ENCODE measurements at regions of chr1 and their contacts with region 1.

Region 1: GRCh38 chr1:155308493-155309422 is at the start of gene FDPS:
- DNase-seq: peak; percentile 99
- H3K4me3 Mint-ChIP-seq: peak within 1 kb of the TSS; percentile 96
- H3K27ac Mint-ChIP-seq: peak within 1 kb of the TSS; percentile 99
- H3K4me1 Mint-ChIP-seq: peaks cover 35% of the 10 kb centered on the region
- H3K27me3 Mint-ChIP-seq: no peaks in the 10 kb centered on the region
- total RNA-seq, gene FDPS: 332 to 333 TPM

Region 2: GRCh38 chr1:155193275-155193990 is 115.3 kb before region 1 on chr1:
- CTCF ChIA-PET with region 1: interaction called, 3 read pairs
- intact Hi-C with region 1: loop called (anchors 5 kb)
- DNase-seq: peak; percentile 86
- H3K4me3 Mint-ChIP-seq: peak overlapping the region; percentile 93
- H3K27ac Mint-ChIP-seq: peak overlapping the region; percentile 96
- H3K4me1 Mint-ChIP-seq: peaks cover 27% of the 10 kb centered on the region
- H3K27me3 Mint-ChIP-seq: no peaks in the 10 kb centered on the region

Region 3: DNA sequence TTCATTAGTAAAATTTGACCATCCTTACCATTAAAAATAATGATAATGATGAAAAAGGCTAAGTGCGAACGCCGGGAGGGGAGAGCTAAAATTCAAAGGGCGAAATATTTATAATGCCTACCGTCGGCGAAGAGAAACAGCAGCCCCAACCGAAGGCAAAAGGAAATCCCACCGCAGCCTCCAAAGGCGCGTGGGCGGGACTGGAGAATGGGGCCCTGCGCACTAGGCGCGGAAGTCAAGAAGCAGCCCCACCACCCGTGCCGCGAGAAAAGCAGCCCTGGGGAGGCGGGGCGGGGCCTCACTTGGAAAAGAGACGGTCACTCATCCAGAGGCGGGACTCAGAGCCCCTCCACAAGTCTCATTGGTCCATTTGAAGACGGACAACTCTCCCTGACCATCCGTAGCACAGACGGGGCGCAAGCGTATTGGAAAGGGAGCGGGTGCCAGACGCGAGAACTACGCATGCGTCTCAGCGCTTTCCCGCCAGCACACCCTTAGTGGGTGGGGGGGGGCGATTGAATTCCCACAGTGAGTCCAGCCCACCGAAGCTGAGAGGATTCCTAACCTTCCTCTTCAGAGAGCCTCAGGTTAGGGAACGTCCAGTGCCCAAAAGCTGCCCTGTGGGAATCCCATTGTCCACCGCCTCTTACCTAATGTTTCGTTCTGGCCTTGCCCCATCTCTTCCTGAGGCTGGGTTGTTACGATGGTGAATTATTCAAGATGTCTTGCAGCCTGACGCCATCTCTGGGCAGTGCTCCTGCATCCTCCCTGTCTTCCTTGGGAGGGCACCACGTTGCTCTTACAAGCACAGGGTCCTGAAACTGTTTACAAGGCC is 81.3 kb before region 1 on chr1:
- CTCF ChIA-PET with region 1: no interaction called
- intact Hi-C with region 1: loop called (anchors 1 kb)
- DNase-seq: peak; percentile 100
- H3K4me3 Mint-ChIP-seq: peak overlapping the region; percentile 89
- H3K27ac Mint-ChIP-seq: peak overlapping the region; percentile 96
- H3K4me1 Mint-ChIP-seq: peaks cover 31% of the 10 kb centered on the region
- H3K27me3 Mint-ChIP-seq: no peaks in the 10 kb centered on the region

Region 4: GRCh38 chr1:155261852-155262673 is 46.7 kb before region 1 on chr1 and contains the start of gene SCAMP3:
- CTCF ChIA-PET with region 1: no interaction called
- intact Hi-C with region 1: loop called (anchors 1 kb)
- DNase-seq: peak; percentile 95
- H3K4me3 Mint-ChIP-seq: peak within 1 kb of the TSS; percentile 95
- H3K27ac Mint-ChIP-seq: peak within 1 kb of the TSS; percentile 93
- H3K4me1 Mint-ChIP-seq: peaks cover 27% of the 10 kb centered on the region
- H3K27me3 Mint-ChIP-seq: no peaks in the 10 kb centered on the region
- total RNA-seq, gene SCAMP3: 80.3 to 82.9 TPM

Region 5: GRCh38 chr1:155323798-155324610 is 15.2 kb after region 1 on chr1:
- CTCF ChIA-PET with region 1: interaction called, 8 read pairs
- intact Hi-C with region 1: loop called (anchors 1 kb)
- DNase-seq: peak; percentile 96
- H3K4me3 Mint-ChIP-seq: peak overlapping the region; percentile 86
- H3K27ac Mint-ChIP-seq: peak overlapping the region; percentile 61
- H3K4me1 Mint-ChIP-seq: peaks cover 42% of the 10 kb centered on the region
- H3K27me3 Mint-ChIP-seq: peaks cover 2% of the 10 kb centered on the region

Region 6: DNA sequence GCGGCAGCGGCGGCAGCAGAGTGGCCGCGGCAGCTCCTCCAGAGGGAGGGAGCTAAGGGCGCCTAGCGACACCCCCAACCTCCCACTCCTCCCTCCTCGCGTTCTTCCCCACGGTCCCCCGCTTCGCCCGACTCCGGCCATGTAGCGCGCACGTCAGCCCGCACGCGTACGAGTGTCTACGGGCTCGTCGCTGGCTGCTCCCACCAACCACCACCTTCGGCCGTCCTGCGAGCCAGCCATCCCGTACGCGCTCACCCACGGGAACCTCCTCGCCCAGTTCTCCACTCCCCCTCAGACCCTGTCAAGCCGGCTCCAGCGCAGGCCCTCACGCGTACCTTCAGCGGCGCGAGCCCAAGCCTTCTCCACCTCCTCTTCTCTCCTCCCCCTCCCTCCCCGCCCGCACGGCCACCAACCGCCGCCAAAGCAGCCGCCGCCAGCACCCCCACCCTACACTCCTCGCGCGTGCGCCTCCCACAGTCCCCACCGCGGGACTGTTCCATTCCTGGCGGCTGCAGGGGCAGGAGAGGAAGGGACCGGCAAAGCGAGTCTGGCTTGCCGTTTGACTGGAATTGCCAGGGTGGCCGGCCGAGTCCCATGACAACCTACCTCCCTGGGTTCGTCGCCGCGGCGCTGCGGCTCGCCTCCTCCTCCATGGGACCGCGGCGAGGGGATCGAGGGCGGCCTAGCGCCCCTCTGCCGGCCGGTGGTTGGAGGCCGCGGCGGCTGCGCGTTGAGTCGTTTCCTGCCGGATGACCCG is 379.7 kb after region 1 on chr1 and contains the start of gene YY1AP1:
- CTCF ChIA-PET with region 1: no interaction called
- intact Hi-C with region 1: loop called (anchors 1 kb)
- DNase-seq: peak; percentile 93
- H3K4me3 Mint-ChIP-seq: peak within 1 kb of the TSS; percentile 97
- H3K27ac Mint-ChIP-seq: peak within 1 kb of the TSS; percentile 95
- H3K4me1 Mint-ChIP-seq: peaks cover 70% of the 10 kb centered on the region
- H3K27me3 Mint-ChIP-seq: no peaks in the 10 kb centered on the region
- total RNA-seq, gene YY1AP1: 54.8 to 59.5 TPM

Measured in activated naive CD4-positive, alpha-beta T cell treated with anti-CD3 and anti-CD28 coated beads for 36 hours (primary cell).